ENCODE measurements at regions of chr18 and their contacts with region 1.

Region 1: DNA sequence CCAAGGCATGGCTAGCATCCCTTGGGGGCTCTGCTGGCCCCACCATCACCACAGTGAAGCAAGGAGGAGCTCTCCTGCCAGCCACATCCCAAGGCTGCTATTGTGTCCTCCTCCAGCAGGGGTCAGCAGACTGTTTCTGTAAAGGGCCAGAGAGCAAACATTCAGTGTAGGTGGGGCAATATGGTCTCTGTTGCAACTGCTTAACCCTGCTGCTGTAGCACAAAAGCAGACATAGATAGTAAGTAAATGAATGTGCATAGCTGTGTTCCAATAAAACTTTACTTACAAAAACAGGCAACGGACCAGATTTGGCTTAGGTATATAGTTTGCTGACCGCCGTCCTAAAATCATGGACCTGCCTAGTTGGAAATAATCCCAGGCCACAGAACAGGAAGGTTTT is 36.4 kb upstream of the ZBTB7C start:
- DNase-seq: peak; percentile 68 to 72
- ATAC-seq: peak; percentile 59 to 81 (median 70)
- H3K4me3 ChIP-seq: no peak overlapping the region
- H3K27ac ChIP-seq: no peak overlapping the region
- H3K4me1 ChIP-seq: peaks cover 20% of the 10 kb centered on the region
- H3K27me3 ChIP-seq: peaks cover 0 to 2% (median 0%) of the 10 kb centered on the region in 3 donors
- CTCF ChIP-seq: peak; percentile 68

Region 2: DNA sequence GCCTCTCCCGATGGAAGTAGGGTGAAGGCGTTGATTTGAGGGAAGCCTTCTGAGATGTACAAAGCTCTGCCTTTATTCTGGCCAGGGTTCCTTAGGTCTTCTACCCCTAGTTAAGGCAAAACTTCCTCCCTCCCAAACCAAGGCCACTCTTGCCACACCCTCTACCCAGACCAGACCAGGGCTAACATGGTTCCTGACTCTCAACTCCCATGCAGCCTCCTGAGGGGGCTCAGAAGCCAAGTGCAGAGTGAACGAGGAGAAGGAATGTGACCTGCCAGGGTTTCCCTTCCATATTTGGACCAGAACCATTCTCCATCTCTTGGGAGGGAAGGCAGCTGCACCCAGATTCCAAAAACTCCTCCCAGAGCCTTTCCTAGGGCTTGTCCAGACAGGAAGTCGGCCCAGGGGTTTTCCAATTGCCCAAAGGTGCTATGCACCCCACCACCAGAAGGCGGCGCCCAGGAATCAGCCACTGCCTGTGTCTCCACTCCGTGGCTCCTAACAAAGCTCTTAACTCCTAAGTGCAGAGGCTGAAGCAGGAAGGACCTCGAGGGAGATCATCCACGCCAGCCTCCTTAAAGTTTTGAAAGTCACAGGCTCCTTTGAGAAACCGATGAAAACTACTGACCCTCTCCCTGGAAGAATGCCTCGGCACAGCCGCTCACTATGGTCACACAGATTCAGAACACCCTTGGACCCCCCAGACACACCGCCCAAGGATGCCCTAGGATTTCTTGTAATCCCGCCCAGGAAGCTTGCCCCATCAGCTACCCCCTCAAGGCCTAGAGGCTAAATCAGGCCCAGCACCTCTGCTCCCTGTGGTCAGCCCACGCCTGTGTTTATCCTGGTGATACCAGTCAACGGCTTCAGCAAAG is 672.9 kb before region 1 on chr18:
- intact Hi-C with region 1: loop called in 1 of 2 experiments (anchors 10 kb)
- DNase-seq: peak; percentile 43 to 65
- ATAC-seq: peak; percentile 74 to 85 (median 80)
- H3K4me3 ChIP-seq: no peak overlapping the region
- H3K27ac ChIP-seq: no peak overlapping the region
- H3K4me1 ChIP-seq: no peaks in the 10 kb centered on the region
- H3K27me3 ChIP-seq: no peaks in the 10 kb centered on the region
- CTCF ChIP-seq: peak; percentile 75

Region 3: DNA sequence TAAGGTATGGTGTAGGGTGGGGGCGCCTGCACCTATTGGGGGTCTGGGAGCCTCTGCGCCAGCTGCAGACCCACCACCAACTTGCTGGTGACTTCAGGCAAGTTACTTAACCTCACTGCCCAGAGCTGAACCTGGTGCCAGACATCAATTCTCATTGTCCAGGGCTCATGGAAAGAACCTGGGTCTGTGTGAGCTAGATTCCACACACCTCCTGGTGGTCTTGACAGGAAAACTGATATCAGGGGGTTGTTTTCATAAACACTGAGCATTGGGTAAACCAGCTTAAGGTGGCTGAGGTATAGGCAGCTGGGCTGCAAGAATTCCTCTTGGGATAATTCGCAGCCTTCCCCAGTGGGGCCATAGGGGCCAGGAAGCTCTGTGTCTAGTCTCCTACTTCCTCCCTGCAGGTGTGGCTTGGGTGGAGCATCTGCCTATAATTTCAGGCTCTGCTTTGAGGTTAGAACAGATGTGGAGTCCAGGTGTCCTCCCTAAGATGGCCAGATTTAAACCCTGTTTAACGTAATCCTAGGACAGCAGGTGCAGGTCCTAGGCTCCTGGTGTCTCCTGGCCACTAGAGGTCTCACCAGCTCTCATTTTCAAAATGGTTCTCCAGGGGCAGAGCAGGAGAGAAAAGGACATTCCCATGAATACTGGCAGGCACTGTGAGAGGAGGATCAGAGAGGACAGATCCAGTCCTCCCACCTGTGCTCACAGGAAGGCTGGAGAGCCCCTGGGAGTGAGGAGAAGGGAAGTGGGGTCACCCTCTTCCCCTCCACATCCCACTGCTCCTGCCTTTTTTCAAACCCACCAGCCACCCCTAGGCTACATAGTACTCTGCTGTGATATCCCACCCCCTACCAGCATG is 414.7 kb before region 1 on chr18:
- intact Hi-C with region 1: loop called (anchors 2 kb)
- DNase-seq: no peak
- ATAC-seq: peak; percentile 72 to 90 (median 80)
- H3K4me3 ChIP-seq: no peak overlapping the region
- H3K27ac ChIP-seq: no peak overlapping the region
- H3K4me1 ChIP-seq: peaks cover 3% of the 10 kb centered on the region
- H3K27me3 ChIP-seq: no peaks in the 10 kb centered on the region
- CTCF ChIP-seq: peak; percentile 75

Region 4: DNA sequence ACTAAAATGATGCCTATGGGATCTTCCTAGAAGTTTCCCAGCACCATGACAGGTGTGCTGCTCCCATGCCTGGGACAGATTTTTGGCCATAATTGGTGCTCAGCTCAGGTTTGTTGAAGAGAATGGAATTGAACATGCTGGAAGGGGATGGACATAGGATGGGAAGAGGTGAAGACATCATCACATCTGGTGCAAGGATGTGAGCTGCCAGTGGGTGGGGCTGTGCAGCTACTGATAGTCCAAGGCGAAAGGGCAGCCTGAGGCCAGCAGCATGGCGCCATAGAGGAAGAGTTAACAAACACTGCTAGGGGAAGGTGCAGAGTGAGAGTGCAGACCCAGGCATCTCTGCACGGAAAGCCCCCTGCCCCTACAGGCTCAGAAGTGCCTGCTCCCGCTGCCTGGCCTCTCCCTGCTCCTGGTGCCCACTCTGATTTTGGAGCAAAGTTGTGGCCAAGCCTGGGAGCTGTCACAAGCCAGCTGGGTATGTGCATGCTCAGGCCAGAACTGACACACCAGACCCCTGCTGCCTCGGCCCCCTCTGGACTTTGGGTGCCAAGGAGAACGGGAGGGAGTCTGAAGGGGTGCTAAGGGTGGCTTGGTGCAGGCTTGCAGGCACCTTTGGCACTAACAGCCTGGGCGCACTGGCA is 214.9 kb before region 1 on chr18:
- intact Hi-C with region 1: loop called (anchors 1 to 2 kb)
- DNase-seq: peak; percentile 76 to 84
- ATAC-seq: peak; percentile 92 to 98 (median 97)
- H3K4me3 ChIP-seq: no peak overlapping the region
- H3K27ac ChIP-seq: no peak overlapping the region
- H3K4me1 ChIP-seq: no peaks in the 10 kb centered on the region
- H3K27me3 ChIP-seq: peaks cover 0 to 4% (median 0%) of the 10 kb centered on the region in 3 donors
- CTCF ChIP-seq: peak; percentile 69

Region 5: DNA sequence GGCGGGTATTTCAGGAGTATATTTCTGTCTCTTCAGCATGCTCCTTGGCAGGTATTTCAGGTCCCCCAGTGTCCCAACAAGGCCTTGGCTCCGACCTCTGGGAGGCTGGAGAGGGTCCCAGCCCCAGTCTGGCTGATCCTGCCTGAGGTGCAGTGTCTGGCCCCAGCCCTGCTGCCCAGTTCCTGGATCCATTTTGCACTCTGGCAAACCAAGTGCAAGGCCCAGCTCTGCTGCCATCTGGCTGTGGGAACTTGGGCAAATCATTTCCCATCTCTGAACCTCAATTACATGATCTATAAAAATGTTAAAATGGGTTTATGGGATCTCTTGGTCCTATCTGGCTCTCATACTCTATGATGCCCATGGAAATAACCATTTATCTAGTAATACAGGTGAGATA is 99.9 kb before region 1 on chr18:
- intact Hi-C with region 1: loop called (anchors 5 to 10 kb)
- DNase-seq: peak in 1 of 2 donors; percentile 57
- ATAC-seq: peak in 3 of 4 donors; percentile 50 to 70 (median 68)
- H3K4me3 ChIP-seq: no peak overlapping the region
- H3K27ac ChIP-seq: no peak overlapping the region
- H3K4me1 ChIP-seq: no peaks in the 10 kb centered on the region
- H3K27me3 ChIP-seq: peaks cover 0 to 1% (median 0%) of the 10 kb centered on the region in 3 donors
- CTCF ChIP-seq: peak; percentile 51

Region 6: DNA sequence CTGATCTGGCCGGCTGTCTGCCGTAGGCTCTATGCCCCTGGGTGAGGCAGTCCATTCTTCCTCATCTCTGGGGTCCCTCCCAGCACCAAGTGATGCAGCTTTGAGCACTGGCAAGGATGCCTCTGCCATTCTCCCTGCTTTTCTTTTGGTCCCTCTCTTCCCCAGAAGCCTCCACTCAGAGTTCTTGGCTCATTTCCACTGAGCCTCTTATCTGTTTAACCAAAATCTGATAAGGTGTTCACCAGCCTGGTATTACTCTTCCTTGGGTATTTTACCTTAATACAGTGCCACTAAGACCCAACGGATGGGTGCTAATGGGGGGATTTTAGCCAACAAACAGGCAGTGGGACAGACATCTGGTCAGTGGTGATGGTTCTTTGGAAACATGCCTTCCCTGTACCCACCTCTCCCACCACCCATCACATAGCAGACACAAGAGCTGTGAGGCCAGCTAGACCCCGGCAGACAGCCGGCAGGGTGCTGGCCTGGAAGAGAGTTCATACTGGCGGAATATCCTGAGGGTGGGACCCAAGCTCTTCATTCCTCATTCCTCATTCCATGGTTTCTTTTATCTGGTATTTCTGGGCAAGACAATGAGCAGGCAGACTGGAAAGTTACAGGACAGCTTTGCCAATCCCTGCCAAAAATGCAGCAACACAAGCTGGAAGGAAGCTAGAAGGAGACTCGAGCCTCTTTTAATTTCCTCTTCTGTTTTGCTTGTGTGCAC is 71.0 kb before region 1 on chr18:
- intact Hi-C with region 1: no loop called
- DNase-seq: no peak
- ATAC-seq: no peak
- H3K4me3 ChIP-seq: no peak overlapping the region
- H3K27ac ChIP-seq: no peak overlapping the region
- H3K4me1 ChIP-seq: no peaks in the 10 kb centered on the region
- H3K27me3 ChIP-seq: peaks cover 0 to under 1% (median 0%) of the 10 kb centered on the region in 3 donors
- CTCF ChIP-seq: no peak

Region 7: GRCh38 chr18:48402953-48403352 is 42.6 kb before region 1 on chr18:
- intact Hi-C with region 1: no loop called
- DNase-seq: no peak
- ATAC-seq: peak in 1 of 4 donors; percentile 32
- H3K4me3 ChIP-seq: no peak overlapping the region
- H3K27ac ChIP-seq: no peak overlapping the region
- H3K4me1 ChIP-seq: peaks cover 1% of the 10 kb centered on the region
- H3K27me3 ChIP-seq: peaks cover 0 to 26% (median 4%) of the 10 kb centered on the region in 3 donors
- CTCF ChIP-seq: no peak

Measured in psoas muscle (tissue), 8 donors.